Mammary epithelial cell (primary cell): ENCODE measurements at regions of chr3 and their contacts with region 1.

Region 1: DNA sequence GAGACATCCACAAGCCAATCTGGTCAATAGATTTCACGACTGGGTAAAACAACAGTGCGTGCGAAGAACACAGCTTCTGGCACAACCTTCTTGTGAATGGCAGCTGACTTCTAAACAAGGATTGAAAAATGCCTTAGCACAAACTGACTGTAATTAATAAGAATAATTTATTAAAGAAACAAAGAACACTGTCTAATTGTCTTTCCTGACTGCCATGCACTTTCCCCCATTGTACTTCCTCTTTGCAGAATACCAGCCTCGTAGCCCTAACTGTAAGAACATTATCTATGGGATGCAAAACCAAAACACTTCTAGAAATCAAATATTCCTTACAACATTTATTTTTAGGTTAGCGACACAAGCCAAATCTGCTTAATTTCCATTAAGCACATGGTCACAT is 6.5 kb downstream of the FOXP1 start:
- DNase-seq: peak; percentile 28
- H3K4me3 ChIP-seq: peak overlapping the region in 2 of 3 experiments; percentile 31 to 98
- H3K27ac ChIP-seq: peak overlapping the region; percentile 52
- H3K4me1 ChIP-seq: peaks cover 46% of the 10 kb centered on the region
- H3K27me3 ChIP-seq: no peaks in the 10 kb centered on the region
- CTCF ChIP-seq: no peak

Region 2: DNA sequence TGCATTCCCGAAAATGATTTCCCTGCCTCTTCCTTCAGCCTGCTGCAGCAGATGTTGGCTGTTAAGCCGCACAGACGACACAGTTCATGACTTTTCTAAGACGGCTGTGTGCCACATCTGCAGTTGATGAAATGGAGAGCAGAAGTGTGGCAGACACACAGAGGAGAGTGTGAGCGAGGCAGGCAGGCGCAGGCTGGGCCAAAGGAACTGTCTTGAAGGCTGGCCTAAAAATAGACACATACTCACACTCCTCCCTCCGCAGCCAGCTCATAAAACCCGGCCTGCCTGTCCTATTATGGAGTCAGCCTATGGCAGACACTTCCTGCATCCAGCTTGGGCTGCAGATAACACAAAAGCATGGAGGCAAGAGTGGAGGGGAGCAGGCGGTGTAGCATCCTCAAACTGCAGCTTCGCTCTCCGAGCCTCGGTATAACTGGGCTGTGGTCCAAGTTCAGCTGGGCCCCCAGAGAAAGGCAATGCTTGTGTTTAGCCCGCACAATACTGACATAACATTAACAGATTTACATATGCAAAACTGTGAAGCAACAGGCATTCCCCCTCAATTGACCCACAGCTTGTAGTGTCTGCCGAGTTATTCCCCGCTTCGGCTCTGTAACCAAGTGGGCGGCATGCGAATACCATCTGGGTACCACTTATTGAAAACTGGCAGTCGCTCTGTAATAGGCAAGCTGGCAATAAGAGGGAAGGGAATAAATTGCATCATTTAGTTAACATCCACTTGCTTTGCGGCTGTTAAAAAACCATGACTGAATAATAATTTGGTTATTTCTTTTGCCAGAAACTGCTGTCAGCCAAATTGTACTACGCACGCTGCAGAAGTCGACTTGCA is 34.3 kb before region 1 on chr3:
- CTCF ChIA-PET with region 1: no interaction called
- dilution Hi-C with region 1: loop called (anchors 5 kb)
- in situ Hi-C with region 1: no loop called
- intact Hi-C with region 1: loop called (anchors 2 kb)
- DNase-seq: peak; percentile 65
- H3K4me3 ChIP-seq: no peak overlapping the region
- H3K27ac ChIP-seq: no peak overlapping the region
- H3K4me1 ChIP-seq: peaks cover 18% of the 10 kb centered on the region
- H3K27me3 ChIP-seq: no peaks in the 10 kb centered on the region
- CTCF ChIP-seq: no peak

Region 3: GRCh38 chr3:72310419-72311380 is 733.7 kb after region 1 on chr3:
- CTCF ChIA-PET with region 1: no interaction called
- dilution Hi-C with region 1: no loop called
- in situ Hi-C with region 1: no loop called
- intact Hi-C with region 1: no loop called
- DNase-seq: no peak
- H3K4me3 ChIP-seq: no peak overlapping the region
- H3K27ac ChIP-seq: no peak overlapping the region
- H3K4me1 ChIP-seq: no peaks in the 10 kb centered on the region
- H3K27me3 ChIP-seq: peaks cover 4% of the 10 kb centered on the region
- CTCF ChIP-seq: no peak